ENCODE measurements at regions of chr4 and their contacts with region 1.

Region 1: DNA sequence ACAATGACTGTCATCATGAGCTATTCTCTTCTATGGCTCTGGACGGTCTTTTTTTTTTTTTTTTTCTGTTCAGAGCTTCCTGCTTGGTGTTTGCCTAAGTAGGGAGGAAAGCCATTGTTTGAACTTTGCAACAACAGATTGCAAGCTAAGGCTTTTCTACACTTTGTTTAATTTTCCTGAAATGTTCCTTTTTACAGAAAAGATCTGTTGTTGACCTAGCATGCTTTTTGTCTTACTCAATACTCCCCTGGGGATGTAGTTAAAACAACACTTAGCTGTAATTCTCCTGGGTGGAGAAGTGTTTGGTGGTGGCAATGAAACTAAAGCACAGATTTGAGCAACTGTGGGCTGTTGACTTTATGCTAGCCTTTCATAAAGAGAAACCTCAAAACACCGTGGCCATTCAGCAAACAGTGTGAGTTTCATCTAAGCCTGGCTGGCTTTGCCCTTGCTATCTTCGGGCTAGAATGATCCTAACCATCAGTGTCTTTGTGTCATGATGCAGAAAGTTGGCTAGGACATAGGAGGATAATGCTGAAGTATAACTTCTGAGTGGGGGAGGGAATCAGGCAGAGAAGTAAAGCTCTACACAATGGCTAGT is 110.5 kb downstream of the ANXA3 start:
- DNase-seq: peak; percentile 30
- ATAC-seq: peak; percentile 70
- H3K4me3 ChIP-seq: no peak overlapping the region
- H3K27ac ChIP-seq: no peak overlapping the region
- H3K4me1 ChIP-seq: peaks cover 37% of the 10 kb centered on the region
- H3K27me3 ChIP-seq: no peaks in the 10 kb centered on the region
- CTCF ChIP-seq: no peak

Region 2: GRCh38 chr4:78312989-78313753 is 348.9 kb before region 1 on chr4:
- CTCF ChIA-PET with region 1: no interaction called
- POLR2A ChIA-PET with region 1: no interaction called
- intact Hi-C with region 1: no loop called
- DNase-seq: no peak
- ATAC-seq: no peak
- H3K4me3 ChIP-seq: no peak overlapping the region
- H3K27ac ChIP-seq: no peak overlapping the region
- H3K4me1 ChIP-seq: no peaks in the 10 kb centered on the region
- H3K27me3 ChIP-seq: no peaks in the 10 kb centered on the region
- CTCF ChIP-seq: no peak

Region 3: GRCh38 chr4:78644744-78645330 is 17.2 kb before region 1 on chr4:
- CTCF ChIA-PET with region 1: no interaction called
- POLR2A ChIA-PET with region 1: no interaction called
- intact Hi-C with region 1: no loop called
- DNase-seq: peak; percentile 76
- ATAC-seq: peak; percentile 62
- H3K4me3 ChIP-seq: peak overlapping the region; percentile 60
- H3K27ac ChIP-seq: peak overlapping the region; percentile 93
- H3K4me1 ChIP-seq: peaks cover 42% of the 10 kb centered on the region
- H3K27me3 ChIP-seq: no peaks in the 10 kb centered on the region
- CTCF ChIP-seq: peak; percentile 68

Region 4: DNA sequence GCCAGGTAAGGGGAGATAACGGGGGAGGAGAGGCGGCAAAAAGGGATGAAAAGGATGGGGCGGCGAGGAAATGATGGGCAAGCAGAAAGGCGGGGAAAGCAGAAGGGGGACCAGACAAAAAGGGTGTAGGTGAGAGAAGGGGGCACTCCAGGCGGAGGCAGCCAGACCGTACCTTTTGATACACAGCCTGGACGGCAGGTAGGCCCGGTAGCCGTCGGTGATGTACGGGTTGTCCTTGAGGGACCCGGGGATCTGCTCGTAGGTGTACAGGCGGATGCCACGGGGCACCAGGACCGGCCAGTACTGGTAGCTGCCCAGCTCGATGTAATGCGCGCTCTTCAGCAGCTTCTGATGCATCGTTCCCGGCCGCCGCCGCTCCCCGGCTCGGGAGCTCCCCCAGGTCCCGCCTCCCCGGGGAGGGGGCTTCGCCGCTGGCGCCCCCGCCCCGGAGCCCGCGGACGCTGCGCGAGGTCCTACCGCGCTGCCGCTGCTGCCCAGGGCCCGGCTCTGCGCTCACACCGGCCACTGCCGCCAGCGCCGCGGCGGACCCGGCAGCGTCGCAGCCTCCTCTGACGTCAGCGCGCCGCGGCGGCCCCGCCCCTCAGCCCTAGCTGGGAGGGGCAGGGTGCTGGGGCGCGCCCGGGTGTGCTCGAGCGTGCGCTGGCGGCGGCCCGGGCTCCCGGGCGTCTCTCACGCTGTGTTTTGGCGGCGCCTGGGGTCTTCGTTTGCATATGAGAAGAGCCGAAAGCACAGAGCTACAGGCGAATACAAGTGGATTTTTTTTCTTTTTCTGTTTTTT is 277.0 kb after region 1 on chr4 and contains the start of gene PAQR3:
- CTCF ChIA-PET with region 1: no interaction called
- POLR2A ChIA-PET with region 1: interaction called, 11 read pairs
- intact Hi-C with region 1: no loop called
- DNase-seq: peak; percentile 86
- ATAC-seq: peak; percentile 95
- H3K4me3 ChIP-seq: peak within 1 kb of the TSS; percentile 93
- H3K27ac ChIP-seq: no peak within 1 kb of the TSS
- H3K4me1 ChIP-seq: peaks cover 8% of the 10 kb centered on the region
- H3K27me3 ChIP-seq: no peaks in the 10 kb centered on the region
- CTCF ChIP-seq: no peak
- total RNA-seq, gene PAQR3: 10.7 and 16.9 TPM in 2 replicates

Measured in PC-3 (cell line).